Heart right ventricle (tissue), 16 donors: ENCODE measurements at regions of chr12 and their contacts with region 1.

Region 1: DNA sequence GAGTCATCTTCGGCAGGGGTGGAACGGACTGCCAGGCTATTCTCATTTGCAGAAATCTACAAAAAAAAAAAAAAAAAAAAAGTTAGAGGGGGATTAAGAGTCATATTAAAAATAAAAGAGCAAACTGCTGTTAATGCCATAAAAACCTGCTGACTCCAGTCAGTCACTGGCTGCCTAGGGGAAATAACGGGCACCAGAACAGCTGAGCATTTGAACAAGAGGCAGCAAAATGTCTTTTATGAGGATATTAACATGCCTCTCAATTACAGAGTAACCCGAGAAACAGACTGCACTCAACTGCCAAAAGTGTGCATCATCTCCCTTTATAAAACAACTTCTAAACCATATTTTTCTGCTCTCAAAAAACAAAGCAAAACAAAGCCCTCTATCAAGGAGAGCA is 28.7 kb upstream of the CERS5 start:
- DNase-seq: no peak
- ATAC-seq: no peak
- H3K4me3 ChIP-seq: no peak overlapping the region
- H3K27ac ChIP-seq: no peak overlapping the region
- H3K4me1 ChIP-seq: peaks cover 0 to 7% (median 0%) of the 10 kb centered on the region in 9 donors
- H3K27me3 ChIP-seq: no peaks in the 10 kb centered on the region
- CTCF ChIP-seq: no peak

Region 2: GRCh38 chr12:49945394-49946080 is 250.3 kb before region 1 on chr12:
- intact Hi-C with region 1: loop called in 1 of 10 experiments (anchors 10 kb)
- DNase-seq: peak; percentile 81 to 87
- ATAC-seq: peak; percentile 94 to 97 (median 96)
- H3K4me3 ChIP-seq: peak overlapping the region in 8 of 10 donors; percentile 13 to 44 (median 36)
- H3K27ac ChIP-seq: peak overlapping the region in 5 of 10 donors; percentile 15 to 65 (median 53)
- H3K4me1 ChIP-seq: peaks cover 0 to 26% (median 10%) of the 10 kb centered on the region in 9 donors
- H3K27me3 ChIP-seq: peaks cover 0 to 12% (median 0%) of the 10 kb centered on the region in 7 donors
- CTCF ChIP-seq: peak; percentile 72 to 97 (median 95)

Region 3: GRCh38 chr12:50246873-50247612 is 51.2 kb after region 1 on chr12:
- intact Hi-C with region 1: no loop called
- DNase-seq: peak; percentile 24 to 86
- ATAC-seq: peak; percentile 75 to 92 (median 89)
- H3K4me3 ChIP-seq: no peak overlapping the region
- H3K27ac ChIP-seq: peak overlapping the region in 8 of 10 donors; percentile 36 to 83 (median 72)
- H3K4me1 ChIP-seq: peaks cover 4 to 70% (median 48%) of the 10 kb centered on the region in 9 donors
- H3K27me3 ChIP-seq: no peaks in the 10 kb centered on the region
- CTCF ChIP-seq: no peak

Region 4: GRCh38 chr12:50597200-50598195 is 401.7 kb after region 1 on chr12:
- intact Hi-C with region 1: no loop called
- DNase-seq: no peak
- ATAC-seq: peak in 6 of 8 donors; percentile 37 to 81 (median 63)
- H3K4me3 ChIP-seq: no peak overlapping the region
- H3K27ac ChIP-seq: peak overlapping the region in 1 of 10 donors; percentile 26
- H3K4me1 ChIP-seq: peaks cover 0 to 33% (median 24%) of the 10 kb centered on the region in 9 donors
- H3K27me3 ChIP-seq: no peaks in the 10 kb centered on the region
- CTCF ChIP-seq: no peak